Left cardiac atrium (tissue), 4 donors: ENCODE measurements at regions of chr1 and their contacts with region 1.

Region 1: DNA sequence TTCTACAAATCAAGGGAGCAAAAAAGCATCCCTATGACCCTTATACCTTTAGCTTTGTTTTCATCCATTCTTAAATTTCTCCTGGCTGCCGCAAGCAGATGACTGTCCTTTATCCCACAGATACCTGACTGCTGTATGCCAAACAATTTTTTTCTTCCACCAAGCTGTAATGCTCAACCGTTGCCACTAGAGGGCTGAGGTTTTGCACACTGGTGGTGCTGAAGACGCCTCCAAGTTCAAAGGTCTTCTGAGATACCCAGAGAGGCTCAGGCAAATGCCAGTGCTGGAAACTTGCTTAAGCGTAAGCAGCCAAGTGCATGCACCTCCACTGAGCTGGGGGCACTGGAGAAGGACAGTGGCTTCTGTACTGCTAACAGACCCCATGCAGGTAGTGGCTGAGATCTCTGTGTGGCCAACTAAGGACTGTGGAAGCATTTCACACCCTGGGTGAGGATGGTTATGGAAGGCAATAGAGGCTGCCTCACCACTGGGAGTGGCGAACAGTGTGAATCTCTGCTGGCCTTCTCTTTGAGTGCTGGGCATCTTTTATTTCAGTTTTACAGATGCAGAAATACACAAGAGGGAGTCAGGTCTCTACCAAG is 28.5 kb downstream of the CNIH3 start:
- DNase-seq: no peak
- ATAC-seq: peak; percentile 61 to 66

Region 2: GRCh38 chr1:224828691-224829090 is 184.0 kb after region 1 on chr1:
- intact Hi-C with region 1: no loop called
- DNase-seq: no peak
- ATAC-seq: no peak

Region 3: GRCh38 chr1:224851210-224851847 is 206.7 kb after region 1 on chr1:
- intact Hi-C with region 1: loop called (anchors 2 to 5 kb)
- DNase-seq: peak; percentile 52
- ATAC-seq: peak; percentile 61 to 71

Region 4: DNA sequence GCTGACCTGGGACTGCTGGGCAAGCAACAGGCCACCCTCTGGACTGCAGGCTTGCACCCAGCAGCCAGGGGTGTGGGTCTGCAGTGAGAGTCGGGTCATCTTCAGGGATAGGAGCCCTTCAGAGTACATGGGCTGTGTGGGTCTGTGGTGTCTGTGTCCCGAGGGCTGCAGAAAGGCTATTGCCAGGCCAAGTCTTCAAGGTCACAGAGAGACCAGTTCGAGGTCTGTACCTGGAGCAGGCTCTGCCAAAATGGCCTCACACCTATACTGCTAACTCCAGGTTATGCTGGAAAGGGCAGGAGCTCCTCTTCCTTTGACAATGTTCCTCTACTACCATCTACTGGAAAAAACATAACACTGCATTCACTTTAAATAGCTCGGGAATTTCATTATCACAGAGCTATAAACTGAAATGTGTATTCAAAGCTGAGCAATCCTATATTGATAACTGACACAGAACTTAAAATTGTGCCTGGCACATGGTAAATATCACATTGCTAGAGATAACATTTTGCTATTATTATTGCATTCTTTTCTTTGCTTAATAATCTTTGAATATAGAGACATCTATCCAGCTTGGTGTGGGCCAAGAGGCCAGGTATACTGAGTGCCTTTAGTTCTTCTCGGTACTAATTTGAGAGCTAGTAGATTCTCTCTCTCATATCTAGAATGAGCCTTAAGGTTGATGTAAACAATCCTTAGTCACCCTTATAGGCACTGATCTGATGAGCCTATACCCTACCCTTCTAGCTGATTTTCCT is 277.9 kb after region 1 on chr1:
- intact Hi-C with region 1: loop called in 1 of 2 experiments (anchors 10 kb)
- DNase-seq: no peak
- ATAC-seq: peak; percentile 61 to 65

Region 5: DNA sequence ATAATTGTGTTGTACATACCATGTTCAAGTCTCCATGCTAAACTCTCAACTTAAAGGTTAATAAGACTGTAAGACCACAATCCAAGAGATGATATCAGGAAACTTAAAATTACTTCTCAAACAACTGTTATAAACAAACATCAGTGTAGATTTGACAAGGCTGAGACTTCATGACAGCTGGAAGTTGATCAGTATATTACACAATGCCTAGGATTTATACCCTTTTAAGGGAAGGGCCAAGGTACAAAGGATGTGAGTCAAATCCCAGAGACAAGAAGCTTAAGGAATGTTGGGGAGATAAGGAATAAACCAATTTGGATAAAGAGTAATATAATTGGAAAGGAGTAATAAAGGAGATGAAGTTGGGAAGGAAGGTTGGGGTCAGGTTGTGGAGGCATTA is 684.4 kb after region 1 on chr1:
- intact Hi-C with region 1: no loop called
- DNase-seq: no peak
- ATAC-seq: no peak